PC-9 (cell line): ENCODE measurements at regions of chr16 and their contacts with region 1.

Region 1: DNA sequence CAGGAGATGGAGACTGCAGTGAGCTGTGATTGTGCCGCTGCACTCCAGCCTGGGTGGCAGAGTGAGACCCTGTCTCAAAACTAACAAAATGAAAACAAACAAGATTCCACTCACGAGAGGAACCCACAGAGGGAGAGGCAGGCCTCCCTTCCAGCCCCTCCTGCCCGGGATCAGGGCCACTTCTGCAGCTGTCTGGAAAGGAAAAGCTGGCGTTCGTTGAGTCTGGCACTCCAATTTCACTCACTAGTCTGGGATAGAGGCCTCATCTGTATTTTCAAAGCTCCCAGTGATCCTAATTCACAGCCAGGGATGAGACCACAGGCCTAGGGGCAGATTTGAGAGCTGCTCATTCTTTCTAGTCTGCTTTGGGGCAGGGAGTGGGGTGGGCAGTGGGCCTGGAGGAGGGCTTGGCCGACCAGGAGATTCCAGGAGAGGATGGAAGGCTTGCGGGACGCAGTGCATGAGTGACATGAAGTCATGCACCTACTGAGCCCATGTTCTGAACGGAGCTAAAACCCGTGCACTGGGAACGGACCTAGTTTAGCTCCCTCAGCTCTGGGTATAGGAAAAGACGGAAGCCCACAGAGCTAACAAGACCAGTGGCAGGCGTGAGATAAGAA is 54.0 kb downstream of the COTL1 start:
- DNase-seq: no peak
- H3K4me3 ChIP-seq: no peak overlapping the region
- H3K27ac ChIP-seq: no peak overlapping the region
- H3K4me1 ChIP-seq: 0 out of 2 replicates have a peak, but pooled peaks cover 8% of the 10 kb centered on the region
- H3K27me3 ChIP-seq: no peaks in the 10 kb centered on the region
- CTCF ChIP-seq: no peak

Region 2: GRCh38 chr16:84548971-84549844 is 14.7 kb before region 1 on chr16:
- CTCF ChIA-PET with region 1: no interaction called
- POLR2A ChIA-PET with region 1: no interaction called
- intact Hi-C with region 1: no loop called
- DNase-seq: no peak
- H3K4me3 ChIP-seq: no peak overlapping the region
- H3K27ac ChIP-seq: no peak overlapping the region
- H3K4me1 ChIP-seq: no peaks in the 10 kb centered on the region
- H3K27me3 ChIP-seq: no peaks in the 10 kb centered on the region
- CTCF ChIP-seq: no peak

Region 3: GRCh38 chr16:84738255-84739038 is 174.6 kb after region 1 on chr16:
- CTCF ChIA-PET with region 1: interaction called, 11 read pairs
- POLR2A ChIA-PET with region 1: no interaction called
- intact Hi-C with region 1: no loop called
- DNase-seq: peak in 1 of 2 experiments; percentile 66
- H3K4me3 ChIP-seq: no peak overlapping the region
- H3K27ac ChIP-seq: 0 out of 2 replicates have a peak overlapping the region, but pooled peaks have one; percentile 18
- H3K4me1 ChIP-seq: peaks cover 48% of the 10 kb centered on the region
- H3K27me3 ChIP-seq: no peaks in the 10 kb centered on the region
- CTCF ChIP-seq: peak; percentile 89